Sigmoid colon (tissue), 7 donors: ENCODE measurements at regions of chr4 and their contacts with region 1.

Region 1: DNA sequence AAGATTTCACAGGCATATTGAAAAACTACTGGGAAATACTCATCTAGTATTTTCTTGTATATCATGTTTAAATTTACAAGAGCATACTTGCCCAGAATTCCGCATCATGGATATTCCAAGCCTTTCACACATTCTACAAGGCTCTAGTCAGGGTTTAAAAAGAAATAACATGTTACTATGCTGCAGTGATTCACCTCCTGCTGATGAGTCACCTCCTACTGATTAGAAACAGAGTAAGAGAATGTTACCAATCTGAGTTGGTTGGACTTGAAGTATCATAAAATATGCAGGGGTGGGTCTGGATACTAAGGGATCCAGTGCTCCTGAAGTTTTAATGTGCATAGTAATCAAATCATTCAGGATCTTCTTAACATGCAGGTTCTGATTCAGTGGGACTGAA is 192.0 kb upstream of the ANK2 start:
- DNase-seq: no peak
- H3K4me3 ChIP-seq: no peak overlapping the region
- H3K27ac ChIP-seq: peak overlapping the region; percentile 45 to 70 (median 62)
- H3K4me1 ChIP-seq: peaks cover 0 to 74% (median 54%) of the 10 kb centered on the region in 4 donors
- H3K27me3 ChIP-seq: no peaks in the 10 kb centered on the region
- CTCF ChIP-seq: no peak
- EP300 ChIP-seq: no peak
- POLR2A ChIP-seq: no peak

Region 2: GRCh38 chr4:112895811-112896608 is 38.5 kb after region 1 on chr4:
- intact Hi-C with region 1: loop called (anchors 5 kb)
- DNase-seq: no peak
- H3K4me3 ChIP-seq: peak overlapping the region in 2 of 4 donors; percentile 23 to 27
- H3K27ac ChIP-seq: peak overlapping the region; percentile 67 to 79 (median 74)
- H3K4me1 ChIP-seq: peaks cover 0 to 34% (median 23%) of the 10 kb centered on the region in 4 donors
- H3K27me3 ChIP-seq: no peaks in the 10 kb centered on the region
- CTCF ChIP-seq: no peak
- EP300 ChIP-seq: no peak
- POLR2A ChIP-seq: no peak

Region 3: GRCh38 chr4:112927544-112927943 is 70.1 kb after region 1 on chr4:
- intact Hi-C with region 1: loop called (anchors 5 kb)
- DNase-seq: no peak
- H3K4me3 ChIP-seq: no peak overlapping the region
- H3K27ac ChIP-seq: peak overlapping the region; percentile 31 to 66 (median 64)
- H3K4me1 ChIP-seq: peaks cover 0 to 54% (median 39%) of the 10 kb centered on the region in 4 donors
- H3K27me3 ChIP-seq: no peaks in the 10 kb centered on the region
- CTCF ChIP-seq: no peak
- EP300 ChIP-seq: peak in 3 of 4 donors; percentile 15 to 81 (median 29)
- POLR2A ChIP-seq: no peak